Spleen (tissue), 13 donors: ENCODE measurements at regions of chr7 and their contacts with region 1.

Region 1: DNA sequence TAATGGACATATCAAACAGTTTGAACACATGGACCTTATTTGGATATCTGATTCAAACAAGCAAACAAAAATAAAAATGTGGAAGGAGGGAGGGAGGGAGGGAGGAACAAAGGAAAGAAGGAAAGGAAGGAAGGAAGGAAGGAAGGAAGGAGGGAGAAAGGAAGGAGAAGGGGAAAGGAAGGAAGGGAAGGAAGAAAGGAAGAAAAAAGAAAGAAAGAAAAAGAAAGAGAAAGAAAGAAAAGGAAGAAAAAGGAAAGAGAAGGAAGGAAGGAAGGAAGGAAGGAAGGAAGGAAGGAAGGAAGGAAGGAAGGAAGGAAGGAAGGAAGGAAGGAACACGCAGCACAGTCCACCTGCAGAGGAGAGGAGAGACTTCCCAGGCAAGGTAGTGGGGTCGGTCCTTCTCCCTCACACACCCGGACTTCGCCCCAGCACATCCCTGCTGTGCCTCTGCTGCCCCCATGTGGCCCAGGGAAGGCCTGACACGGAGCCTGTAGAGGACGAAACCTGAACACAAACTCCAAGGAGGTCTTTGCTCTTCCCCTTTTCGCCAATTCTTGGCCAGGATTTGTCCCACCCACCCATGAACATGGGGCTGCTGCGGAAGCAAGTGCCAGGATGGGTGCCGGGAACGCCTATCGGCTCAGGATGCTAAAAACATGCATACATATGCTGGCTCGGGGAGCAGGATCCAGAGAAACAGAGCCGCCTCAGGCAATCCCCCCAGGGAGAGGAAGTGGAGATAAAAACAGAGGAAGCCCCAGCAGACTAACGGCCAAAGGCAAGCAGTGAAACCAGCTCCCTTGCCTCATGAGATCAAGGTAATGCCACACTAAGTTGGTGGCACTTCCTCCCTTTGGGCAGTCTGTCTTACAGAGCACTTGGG is 52.3 kb upstream of the DGKI start:
- DNase-seq: peak; percentile 93
- H3K4me3 ChIP-seq: peak overlapping the region in 4 of 8 donors; percentile 9 to 57 (median 23)
- H3K27ac ChIP-seq: peak overlapping the region in 6 of 8 donors; percentile 25 to 73 (median 57)
- H3K4me1 ChIP-seq: peaks cover 14 to 34% (median 26%) of the 10 kb centered on the region in 6 donors
- H3K27me3 ChIP-seq: no peaks in the 10 kb centered on the region
- CTCF ChIP-seq: peak; percentile 73 to 93 (median 88)
- POLR2A ChIP-seq: no peak

Region 2: DNA sequence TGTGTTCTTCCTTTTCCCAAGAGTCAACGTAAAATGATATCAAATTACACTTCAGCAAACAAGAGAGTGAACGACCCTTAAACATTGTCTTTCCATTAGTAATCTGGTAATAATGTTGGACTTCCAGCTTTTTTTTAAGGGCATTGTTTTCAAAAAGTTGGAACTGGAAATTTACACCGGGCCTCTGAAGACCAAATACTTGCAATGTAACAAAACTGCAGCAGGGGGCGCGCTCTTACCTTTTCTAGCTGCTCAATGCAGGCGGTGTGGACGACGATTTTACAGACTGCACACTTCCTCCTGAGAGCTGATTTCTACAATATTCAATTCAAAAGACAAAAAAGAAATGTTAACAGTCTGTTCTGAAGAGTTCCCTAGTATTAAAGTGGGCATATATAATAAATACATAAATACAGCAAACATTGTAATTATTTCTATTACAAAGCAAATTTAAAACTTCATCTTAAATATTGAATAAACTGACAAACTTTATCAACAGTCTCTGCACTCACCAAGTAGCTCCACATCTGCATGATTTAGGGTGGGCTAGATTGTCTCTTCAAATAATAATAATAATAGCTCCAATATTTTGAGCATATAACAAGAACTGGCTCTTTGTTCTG is 242.7 kb before region 1 on chr7:
- intact Hi-C with region 1: loop called (anchors 5 kb)
- DNase-seq: peak; percentile 80
- H3K4me3 ChIP-seq: no peak overlapping the region
- H3K27ac ChIP-seq: no peak overlapping the region
- H3K4me1 ChIP-seq: peaks cover 0 to 7% (median 2%) of the 10 kb centered on the region in 6 donors
- H3K27me3 ChIP-seq: peaks cover 0 to 5% (median 0%) of the 10 kb centered on the region in 7 donors
- CTCF ChIP-seq: peak; percentile 28 to 83 (median 52)
- POLR2A ChIP-seq: no peak

Region 3: DNA sequence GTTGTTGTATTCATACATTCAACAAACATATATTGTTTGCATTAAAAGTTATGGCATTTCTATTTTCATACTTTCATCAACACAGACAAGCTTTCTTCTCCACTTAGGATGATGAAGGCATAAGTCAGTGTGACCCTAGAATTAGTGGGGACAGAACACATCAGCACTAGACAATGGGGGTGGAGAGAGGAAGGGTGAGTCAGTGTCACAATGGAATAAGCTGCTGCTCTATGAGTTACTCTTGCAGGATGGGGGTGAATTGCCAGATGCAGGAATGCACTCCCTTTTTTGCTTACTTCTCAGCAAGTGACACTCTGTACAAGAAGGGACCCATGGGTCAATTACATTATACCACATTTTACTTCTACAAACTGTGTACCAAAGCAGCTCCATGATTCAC is 126.3 kb before region 1 on chr7:
- intact Hi-C with region 1: no loop called
- DNase-seq: no peak
- H3K4me3 ChIP-seq: no peak overlapping the region
- H3K27ac ChIP-seq: no peak overlapping the region
- H3K4me1 ChIP-seq: no peaks in the 10 kb centered on the region
- H3K27me3 ChIP-seq: peaks cover 0 to 5% (median 0%) of the 10 kb centered on the region in 7 donors
- CTCF ChIP-seq: no peak
- POLR2A ChIP-seq: no peak

Region 4: GRCh38 chr7:138008547-138009349 is 109.7 kb after region 1 on chr7:
- intact Hi-C with region 1: loop called (anchors 2 kb)
- DNase-seq: no peak
- H3K4me3 ChIP-seq: no peak overlapping the region
- H3K27ac ChIP-seq: no peak overlapping the region
- H3K4me1 ChIP-seq: peaks cover 0 to 11% (median 6%) of the 10 kb centered on the region in 6 donors
- H3K27me3 ChIP-seq: no peaks in the 10 kb centered on the region
- CTCF ChIP-seq: peak; percentile 78 to 95 (median 91)
- POLR2A ChIP-seq: no peak